ENCODE measurements at regions of chr3 and their contacts with region 1.

Region 1: GRCh38 chr3:148778926-148779325 is 48.7 kb upstream of the CPB1 start:
- DNase-seq: no peak
- H3K4me3 Mint-ChIP-seq: no peak overlapping the region
- H3K27ac Mint-ChIP-seq: no peak overlapping the region
- H3K4me1 Mint-ChIP-seq: no peaks in the 10 kb centered on the region
- H3K27me3 Mint-ChIP-seq: no peaks in the 10 kb centered on the region

Region 2: DNA sequence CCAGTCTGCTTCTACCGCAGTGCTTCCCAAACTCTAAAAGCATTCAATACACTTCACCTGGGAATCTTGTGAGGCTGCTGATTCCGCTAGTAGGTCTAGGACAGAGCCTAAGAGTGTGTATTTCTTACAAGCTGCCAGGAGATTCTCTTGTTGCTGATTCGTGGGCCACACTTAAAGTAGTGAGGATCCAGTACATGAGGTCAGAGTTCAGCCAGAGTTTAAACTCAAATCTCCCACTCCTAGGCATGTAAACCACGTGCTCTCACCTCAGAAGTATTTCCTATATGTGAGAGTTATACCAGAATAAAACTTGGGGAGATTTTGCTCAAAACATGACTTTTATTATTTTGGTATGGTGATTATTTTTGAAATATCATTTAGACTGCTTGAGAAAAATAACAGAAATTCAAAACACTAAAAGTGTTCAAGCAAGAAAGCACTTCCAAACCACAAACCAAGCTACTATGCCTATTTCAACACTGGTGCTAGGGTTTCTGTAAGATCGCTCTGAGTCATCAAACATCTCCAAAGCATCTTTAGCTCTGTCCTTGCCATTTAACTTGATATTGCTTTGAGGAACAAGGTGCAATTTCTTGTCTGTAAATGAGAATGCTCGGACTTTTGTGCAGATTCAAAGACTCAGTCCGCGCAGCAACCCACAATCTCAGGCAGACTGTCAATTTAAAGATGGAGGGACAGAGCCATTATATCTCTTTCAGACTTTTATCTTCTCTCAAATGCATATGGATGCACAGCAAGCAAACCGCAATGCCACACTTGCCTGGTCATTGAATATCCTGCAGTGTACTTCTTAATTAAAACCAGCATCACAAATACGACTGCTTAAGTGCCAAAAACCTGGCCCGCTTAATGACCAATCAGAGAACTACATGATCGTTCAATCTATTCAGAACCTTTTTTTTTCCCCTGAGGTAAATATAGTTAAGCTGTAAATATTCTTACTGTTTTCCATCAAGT is 21.4 kb before region 1 on chr3:
- CTCF ChIA-PET with region 1: no interaction called
- intact Hi-C with region 1: loop called (anchors 1 kb)
- DNase-seq: no peak
- H3K4me3 Mint-ChIP-seq: no peak overlapping the region
- H3K27ac Mint-ChIP-seq: no peak overlapping the region
- H3K4me1 Mint-ChIP-seq: no peaks in the 10 kb centered on the region
- H3K27me3 Mint-ChIP-seq: peaks cover 2% of the 10 kb centered on the region

Measured in activated naive CD4-positive, alpha-beta T cell treated with anti-CD3 and anti-CD28 coated beads for 36 hours (primary cell).